ENCODE measurements at regions of chr17 and their contacts with region 1.

Region 1: DNA sequence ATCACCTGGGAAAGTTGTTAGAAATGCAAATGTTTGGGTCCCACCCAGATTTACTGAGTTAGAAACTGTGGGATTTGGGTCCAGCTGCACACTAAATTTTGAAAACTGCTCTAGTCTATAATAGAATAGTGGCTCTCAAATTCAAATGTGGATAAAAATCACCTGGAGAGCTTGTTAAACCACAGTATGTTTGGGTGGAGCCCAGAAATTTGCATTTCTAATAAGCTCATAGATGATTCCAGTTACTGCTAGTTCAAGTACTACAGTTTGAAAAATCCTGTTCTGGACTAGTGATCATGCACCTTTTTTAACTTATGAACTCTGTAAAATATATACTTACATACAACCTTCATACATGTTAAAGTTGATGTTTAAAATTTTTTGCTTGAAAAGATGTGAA is 27.8 kb downstream of the RABEP1 start:
- DNase-seq: no peak
- ATAC-seq: no peak
- H3K4me3 ChIP-seq: no peak overlapping the region
- H3K27ac ChIP-seq: no peak overlapping the region
- H3K4me1 ChIP-seq: 0 out of 2 replicates have a peak, but pooled peaks cover 2% of the 10 kb centered on the region
- H3K27me3 ChIP-seq: no peaks in the 10 kb centered on the region
- CTCF ChIP-seq: no peak
- POLR2A ChIP-seq: no peak
- RAD21 ChIP-seq: no peak

Region 2: GRCh38 chr17:4463818-4464476 is 845.9 kb before region 1 on chr17:
- CTCF ChIA-PET with region 1: no interaction called
- POLR2A ChIA-PET with region 1: no interaction called
- dilution Hi-C with region 1: no loop called
- in situ Hi-C with region 1: no loop called
- intact Hi-C with region 1: no loop called
- DNase-seq: no peak
- ATAC-seq: no peak
- H3K4me3 ChIP-seq: no peak overlapping the region
- H3K27ac ChIP-seq: no peak overlapping the region
- H3K4me1 ChIP-seq: no peaks in the 10 kb centered on the region
- H3K27me3 ChIP-seq: peaks cover 15% of the 10 kb centered on the region
- CTCF ChIP-seq: no peak
- POLR2A ChIP-seq: no peak
- RAD21 ChIP-seq: no peak

Region 3: DNA sequence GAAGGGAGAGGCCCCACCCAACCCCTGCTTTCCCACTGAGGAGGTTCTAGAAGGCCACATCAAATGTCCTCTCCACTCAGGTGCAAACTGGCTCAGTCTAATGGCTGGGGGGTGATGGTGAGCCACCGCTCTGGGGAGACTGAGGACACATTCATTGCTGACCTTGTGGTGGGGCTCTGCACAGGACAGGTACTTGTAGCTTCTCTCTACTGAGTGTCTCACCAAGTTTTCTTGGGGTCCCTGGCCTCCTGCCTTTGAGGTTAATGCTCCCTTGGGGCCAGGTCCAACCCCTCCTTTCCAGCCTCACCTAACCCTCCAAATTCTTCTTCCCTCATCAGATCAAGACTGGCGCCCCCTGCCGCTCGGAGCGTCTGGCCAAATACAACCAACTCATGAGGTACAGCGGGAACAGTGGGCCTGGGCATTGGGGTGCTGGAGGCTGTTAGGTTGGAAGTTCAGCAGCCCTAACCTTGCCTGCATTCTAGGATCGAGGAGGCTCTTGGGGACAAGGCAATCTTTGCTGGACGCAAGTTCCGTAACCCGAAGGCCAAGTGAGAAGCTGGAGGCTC is 353.3 kb before region 1 on chr17:
- CTCF ChIA-PET with region 1: no interaction called
- POLR2A ChIA-PET with region 1: no interaction called
- dilution Hi-C with region 1: no loop called
- in situ Hi-C with region 1: no loop called
- intact Hi-C with region 1: no loop called
- DNase-seq: no peak
- ATAC-seq: no peak
- H3K4me3 ChIP-seq: no peak overlapping the region
- H3K27ac ChIP-seq: no peak overlapping the region
- H3K4me1 ChIP-seq: peaks cover 15% of the 10 kb centered on the region
- H3K27me3 ChIP-seq: no peaks in the 10 kb centered on the region
- CTCF ChIP-seq: peak; percentile 10; the same call in 1 of the 2 replicates
- POLR2A ChIP-seq: no peak
- RAD21 ChIP-seq: no peak

Region 4: DNA sequence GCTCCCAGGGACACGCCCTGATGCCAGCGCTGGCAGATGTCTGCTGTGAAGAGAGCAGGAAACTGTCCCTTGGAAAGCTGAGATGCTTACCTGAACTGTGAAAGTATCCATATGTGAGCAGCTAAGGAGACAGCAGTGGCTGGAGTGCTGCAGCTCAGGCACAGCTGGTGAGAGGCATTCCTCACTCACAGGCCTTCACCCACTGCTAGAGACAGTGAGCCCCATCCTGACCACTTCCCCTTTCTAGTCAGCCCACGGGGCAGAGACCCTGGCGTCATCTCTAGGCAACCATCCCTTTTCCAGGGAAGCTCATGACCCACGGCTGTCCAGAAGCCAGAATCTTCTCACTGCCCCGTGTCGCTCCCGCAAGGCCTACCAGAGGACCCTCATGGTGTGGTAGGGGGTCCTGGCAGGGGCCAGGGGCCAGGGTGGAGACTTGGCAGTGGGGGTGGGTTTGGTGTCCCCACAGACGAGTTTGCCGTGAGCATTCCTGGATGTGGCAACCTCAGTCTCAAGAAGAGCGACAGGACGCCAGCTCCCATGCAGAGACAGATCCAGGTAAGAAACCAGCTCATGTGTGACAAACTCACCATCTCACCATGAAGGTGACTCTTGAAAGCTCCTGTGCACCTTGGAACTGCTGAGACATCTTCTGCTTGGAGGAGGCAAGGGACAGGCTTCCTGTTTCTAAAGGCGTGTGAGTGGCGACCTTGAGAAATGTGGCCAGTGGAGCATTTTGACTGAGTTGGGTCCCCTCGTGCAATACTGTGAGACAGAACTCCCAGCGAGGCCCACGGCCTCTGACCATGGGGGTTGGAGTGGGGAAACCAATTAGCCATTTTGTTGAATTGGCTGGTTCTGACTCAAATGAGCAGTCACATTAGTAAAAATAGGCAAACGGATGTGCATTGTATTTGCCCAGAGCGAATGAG is 74.9 kb before region 1 on chr17 and contains the start of gene SCIMP:
- CTCF ChIA-PET with region 1: no interaction called
- POLR2A ChIA-PET with region 1: no interaction called
- dilution Hi-C with region 1: no loop called
- in situ Hi-C with region 1: no loop called
- intact Hi-C with region 1: no loop called
- DNase-seq: no peak
- ATAC-seq: no peak
- H3K4me3 ChIP-seq: no peak within 1 kb of the TSS
- H3K27ac ChIP-seq: no peak within 1 kb of the TSS
- H3K4me1 ChIP-seq: no peaks in the 10 kb centered on the region
- H3K27me3 ChIP-seq: no peaks in the 10 kb centered on the region
- CTCF ChIP-seq: no peak
- POLR2A ChIP-seq: no peak
- RAD21 ChIP-seq: no peak
- total RNA-seq, gene SCIMP: not detected in 2 replicates

Region 5: DNA sequence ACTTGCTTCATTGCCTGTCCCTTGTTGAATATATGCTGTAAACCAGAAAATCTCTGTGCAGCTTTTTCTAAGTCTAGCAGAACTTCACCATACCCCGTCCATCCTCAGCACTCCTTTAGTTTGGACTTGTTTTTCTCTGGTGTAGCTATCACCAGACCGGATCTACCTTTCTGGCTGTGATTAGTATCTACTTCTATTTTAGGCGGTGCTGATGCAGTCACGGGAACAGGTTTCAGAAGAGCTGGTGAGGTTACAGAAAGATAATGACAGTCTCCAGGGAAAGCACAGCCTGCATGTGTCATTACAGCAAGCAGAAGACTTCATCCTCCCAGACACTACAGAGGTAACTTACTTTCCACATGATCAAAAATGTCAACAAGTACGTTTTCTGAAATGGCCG is 63.3 kb after region 1 on chr17:
- CTCF ChIA-PET with region 1: no interaction called
- POLR2A ChIA-PET with region 1: no interaction called
- dilution Hi-C with region 1: no loop called
- in situ Hi-C with region 1: loop called (anchors 10 kb)
- intact Hi-C with region 1: no loop called
- DNase-seq: no peak
- ATAC-seq: no peak
- H3K4me3 ChIP-seq: no peak overlapping the region
- H3K27ac ChIP-seq: no peak overlapping the region
- H3K4me1 ChIP-seq: no peaks in the 10 kb centered on the region
- H3K27me3 ChIP-seq: no peaks in the 10 kb centered on the region
- CTCF ChIP-seq: no peak
- POLR2A ChIP-seq: no peak
- RAD21 ChIP-seq: no peak

Region 6: GRCh38 chr17:5405400-5405799 is 95.5 kb after region 1 on chr17:
- CTCF ChIA-PET with region 1: interaction called, 10 read pairs
- POLR2A ChIA-PET with region 1: no interaction called
- dilution Hi-C with region 1: no loop called
- in situ Hi-C with region 1: no loop called
- intact Hi-C with region 1: no loop called
- DNase-seq: no peak
- ATAC-seq: no peak
- H3K4me3 ChIP-seq: no peak overlapping the region
- H3K27ac ChIP-seq: no peak overlapping the region
- H3K4me1 ChIP-seq: no peaks in the 10 kb centered on the region
- H3K27me3 ChIP-seq: no peaks in the 10 kb centered on the region
- CTCF ChIP-seq: no peak
- POLR2A ChIP-seq: no peak
- RAD21 ChIP-seq: no peak